SK-N-SH (cell line): ENCODE measurements at regions of chr17 and their contacts with region 1.

Region 1: DNA sequence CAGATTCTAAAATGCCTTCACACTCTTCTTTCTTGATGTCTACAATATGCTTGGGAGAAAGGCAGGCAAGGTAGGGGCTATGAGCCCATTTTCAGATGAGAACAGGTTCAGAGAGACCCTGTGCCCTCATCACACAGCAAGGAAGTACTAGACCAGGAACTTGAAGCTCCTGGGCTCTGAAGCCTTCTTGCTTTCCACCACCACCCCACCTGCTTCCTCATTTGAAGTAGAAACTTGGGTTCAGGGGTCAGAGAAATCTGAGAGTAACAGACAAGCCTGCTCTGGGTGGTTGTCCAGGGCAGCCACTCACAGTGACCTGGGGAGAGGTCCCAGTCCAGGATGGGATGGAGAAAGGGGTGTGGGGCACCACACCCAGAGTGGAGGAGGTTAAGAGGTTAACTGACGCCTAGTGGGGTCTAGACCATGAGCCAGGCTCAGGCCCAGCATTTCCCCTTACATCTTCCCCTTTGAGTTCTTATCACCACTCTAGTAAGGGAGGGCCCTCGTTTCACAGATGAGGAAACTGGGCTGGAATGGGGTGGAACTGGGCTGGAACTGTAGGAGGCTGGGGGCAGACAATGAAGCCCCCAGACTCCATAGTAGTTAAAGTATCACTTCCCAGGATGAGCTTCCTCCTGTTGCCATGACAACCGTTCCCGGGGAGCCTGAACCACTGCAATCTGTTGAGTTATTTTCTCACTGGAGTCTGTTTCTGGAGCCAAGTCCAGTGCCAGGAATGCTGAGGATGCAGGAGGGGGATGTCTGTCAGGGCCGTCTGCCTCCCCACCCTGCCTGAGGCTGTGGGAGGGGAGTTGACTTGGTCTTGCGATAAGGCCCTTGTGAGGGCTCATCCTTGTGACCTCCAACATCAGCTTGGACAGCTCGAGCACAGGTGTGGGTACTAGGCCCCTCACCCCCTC is 16.2 kb upstream of the PHF12 start:
- DNase-seq: no peak
- H3K4me3 ChIP-seq: no peak overlapping the region
- H3K27ac ChIP-seq: no peak overlapping the region
- H3K4me1 ChIP-seq: peaks cover 0 to 37% of the 10 kb centered on the region in 2 experiments; a peak in 3 of 4 replicates
- H3K27me3 ChIP-seq: no peaks in the 10 kb centered on the region; the same call in 1 of the 2 replicates
- CTCF ChIP-seq: no peak
- EP300 ChIP-seq: no peak
- RAD21 ChIP-seq: no peak

Region 2: DNA sequence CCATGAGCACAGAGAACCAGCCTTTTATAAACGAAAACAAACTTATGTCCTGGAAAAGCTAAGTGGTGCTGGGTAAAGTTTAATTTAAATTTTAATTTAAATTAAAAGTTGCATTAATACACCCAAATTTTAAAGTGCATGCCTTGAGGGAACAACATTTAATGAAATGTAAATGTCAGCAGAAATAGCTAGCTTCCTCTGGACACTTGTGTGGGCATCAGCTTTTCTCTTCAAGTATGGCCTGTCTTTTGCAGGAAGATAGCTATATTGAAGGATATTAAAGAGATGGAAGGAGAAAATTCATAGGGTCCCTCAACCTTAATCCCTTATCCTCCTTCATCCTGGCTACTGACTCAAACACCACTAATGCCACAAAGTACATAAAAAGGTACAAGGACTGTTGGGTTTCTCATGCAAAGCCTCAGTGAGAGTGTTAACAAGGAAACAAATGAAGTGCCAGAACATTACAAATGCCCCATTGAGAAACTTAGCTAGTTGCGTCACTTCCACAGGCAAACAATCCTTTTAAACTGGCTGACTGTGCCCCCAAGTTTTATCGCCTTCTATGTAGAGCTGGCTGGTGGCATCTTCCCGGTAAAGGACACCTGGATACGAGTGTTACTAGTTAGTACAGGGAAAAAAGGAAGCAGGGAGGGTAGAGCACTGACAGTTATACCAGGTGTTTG is 30.3 kb before region 1 on chr17:
- CTCF ChIA-PET with region 1: no interaction called
- POLR2A ChIA-PET with region 1: no interaction called
- DNase-seq: no peak
- H3K4me3 ChIP-seq: no peak overlapping the region
- H3K27ac ChIP-seq: no peak overlapping the region
- H3K4me1 ChIP-seq: peaks cover 0 to 26% of the 10 kb centered on the region in 2 experiments; a peak in 2 of 4 replicates
- H3K27me3 ChIP-seq: no peaks in the 10 kb centered on the region
- CTCF ChIP-seq: no peak
- EP300 ChIP-seq: no peak
- RAD21 ChIP-seq: no peak

Region 3: GRCh38 chr17:28992625-28993600 is 25.4 kb after region 1 on chr17:
- CTCF ChIA-PET with region 1: interaction called, 13 read pairs
- POLR2A ChIA-PET with region 1: no interaction called
- DNase-seq: no peak
- H3K4me3 ChIP-seq: no peak overlapping the region
- H3K27ac ChIP-seq: no peak overlapping the region
- H3K4me1 ChIP-seq: peaks cover 0 to 27% of the 10 kb centered on the region in 2 experiments; a peak in 1 of 4 replicates
- H3K27me3 ChIP-seq: no peaks in the 10 kb centered on the region
- CTCF ChIP-seq: no peak
- EP300 ChIP-seq: no peak
- RAD21 ChIP-seq: no peak

Region 4: DNA sequence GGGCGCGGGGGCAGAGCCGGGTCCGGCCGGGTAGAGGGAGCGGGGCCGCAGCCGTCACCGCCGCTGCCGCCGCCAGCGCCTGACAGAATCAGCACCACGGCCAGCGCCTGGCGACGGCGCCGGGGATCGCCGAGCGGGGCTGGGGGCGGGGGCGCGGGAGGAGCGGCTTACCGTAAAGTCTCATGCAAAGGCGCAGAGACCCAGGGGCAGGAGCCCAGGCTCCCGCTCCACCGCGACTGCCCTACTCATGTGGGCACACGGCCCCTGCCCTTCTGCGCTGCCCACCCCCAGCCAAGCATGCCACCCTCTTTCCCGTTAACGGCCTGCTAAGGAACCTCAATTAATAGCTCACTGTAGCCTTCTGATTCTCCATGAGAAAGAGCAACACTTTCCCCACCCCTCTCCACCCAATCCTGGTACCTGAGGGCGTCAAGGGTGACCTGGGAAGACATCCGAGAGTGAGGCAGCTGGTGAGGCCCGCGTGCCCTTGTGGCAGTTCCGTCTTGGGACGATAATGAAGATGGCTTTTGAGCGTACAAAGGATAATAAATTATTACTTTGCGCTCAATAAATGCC is 38.5 kb after region 1 on chr17 and contains the start of gene SEZ6:
- CTCF ChIA-PET with region 1: interaction called, 22 read pairs
- POLR2A ChIA-PET with region 1: no interaction called
- DNase-seq: peak; percentile 94
- H3K4me3 ChIP-seq: peak within 1 kb of the TSS in 1 of 2 experiments; percentile 43; a peak in 3 of 4 replicates
- H3K27ac ChIP-seq: peak within 1 kb of the TSS in 1 of 2 experiments; percentile 28; a peak in 1 of 4 replicates
- H3K4me1 ChIP-seq: peaks cover 7 to 27% of the 10 kb centered on the region in 2 experiments; a peak in 2 of 4 replicates
- H3K27me3 ChIP-seq: peaks cover 35% of the 10 kb centered on the region
- CTCF ChIP-seq: no peak
- EP300 ChIP-seq: peak; percentile 9 to 25; a peak in 1 of 4 replicates
- RAD21 ChIP-seq: no peak
- polyA plus RNA-seq, gene SEZ6: 0.12 and 0.37 TPM in 2 replicates

Region 5: GRCh38 chr17:29024316-29024952 is 57.0 kb after region 1 on chr17:
- CTCF ChIA-PET with region 1: no interaction called
- POLR2A ChIA-PET with region 1: no interaction called
- DNase-seq: no peak
- H3K4me3 ChIP-seq: no peak overlapping the region
- H3K27ac ChIP-seq: no peak overlapping the region
- H3K4me1 ChIP-seq: no peaks in the 10 kb centered on the region; a peak in 1 of 4 replicates
- H3K27me3 ChIP-seq: peaks cover 35% of the 10 kb centered on the region; the same call in 1 of the 2 replicates
- CTCF ChIP-seq: no peak
- EP300 ChIP-seq: no peak
- RAD21 ChIP-seq: no peak

Region 6: GRCh38 chr17:29042679-29043538 is 75.4 kb after region 1 on chr17 and contains the start of gene PIPOX:
- CTCF ChIA-PET with region 1: interaction called, 17 read pairs
- POLR2A ChIA-PET with region 1: interaction called, 17 read pairs
- DNase-seq: peak; percentile 76
- H3K4me3 ChIP-seq: no peak within 1 kb of the TSS
- H3K27ac ChIP-seq: peak within 1 kb of the TSS in 1 of 2 experiments; percentile 58; a peak in 2 of 4 replicates
- H3K4me1 ChIP-seq: peaks cover 43 to 49% of the 10 kb centered on the region in 2 experiments; a peak in 3 of 4 replicates
- H3K27me3 ChIP-seq: 0 out of 2 replicates have a peak, but pooled peaks cover under 1% of the 10 kb centered on the region
- CTCF ChIP-seq: peak; percentile 32; the same call in 1 of the 2 replicates
- EP300 ChIP-seq: no peak
- RAD21 ChIP-seq: peak; percentile 59
- polyA plus RNA-seq, gene PIPOX: 0.31 and 0.55 TPM in 2 replicates

Region 7: DNA sequence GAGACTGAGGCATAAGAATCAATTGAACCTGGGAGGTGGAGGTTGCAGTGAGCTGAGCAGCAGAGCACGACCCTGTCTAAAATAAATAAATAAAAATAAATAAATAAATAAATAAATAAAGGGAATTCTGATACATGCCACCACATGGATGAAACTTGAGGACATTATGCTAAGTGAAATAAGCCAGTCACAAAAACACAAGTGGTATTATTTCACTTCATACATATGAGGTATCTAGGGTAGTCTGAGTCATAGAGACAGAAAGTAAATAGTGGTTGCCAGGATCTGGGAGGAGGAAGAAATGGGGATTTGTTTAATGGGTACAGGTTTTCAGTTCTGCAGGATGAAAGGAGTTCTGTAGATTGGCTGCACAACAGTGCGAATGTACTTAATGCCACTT is 91.8 kb after region 1 on chr17:
- CTCF ChIA-PET with region 1: interaction called, 11 read pairs
- POLR2A ChIA-PET with region 1: no interaction called
- DNase-seq: no peak
- H3K4me3 ChIP-seq: no peak overlapping the region
- H3K27ac ChIP-seq: no peak overlapping the region
- H3K4me1 ChIP-seq: peaks cover 7 to 45% of the 10 kb centered on the region in 2 experiments; a peak in 3 of 4 replicates
- H3K27me3 ChIP-seq: no peaks in the 10 kb centered on the region
- CTCF ChIP-seq: no peak
- EP300 ChIP-seq: no peak
- RAD21 ChIP-seq: no peak

Region 8: DNA sequence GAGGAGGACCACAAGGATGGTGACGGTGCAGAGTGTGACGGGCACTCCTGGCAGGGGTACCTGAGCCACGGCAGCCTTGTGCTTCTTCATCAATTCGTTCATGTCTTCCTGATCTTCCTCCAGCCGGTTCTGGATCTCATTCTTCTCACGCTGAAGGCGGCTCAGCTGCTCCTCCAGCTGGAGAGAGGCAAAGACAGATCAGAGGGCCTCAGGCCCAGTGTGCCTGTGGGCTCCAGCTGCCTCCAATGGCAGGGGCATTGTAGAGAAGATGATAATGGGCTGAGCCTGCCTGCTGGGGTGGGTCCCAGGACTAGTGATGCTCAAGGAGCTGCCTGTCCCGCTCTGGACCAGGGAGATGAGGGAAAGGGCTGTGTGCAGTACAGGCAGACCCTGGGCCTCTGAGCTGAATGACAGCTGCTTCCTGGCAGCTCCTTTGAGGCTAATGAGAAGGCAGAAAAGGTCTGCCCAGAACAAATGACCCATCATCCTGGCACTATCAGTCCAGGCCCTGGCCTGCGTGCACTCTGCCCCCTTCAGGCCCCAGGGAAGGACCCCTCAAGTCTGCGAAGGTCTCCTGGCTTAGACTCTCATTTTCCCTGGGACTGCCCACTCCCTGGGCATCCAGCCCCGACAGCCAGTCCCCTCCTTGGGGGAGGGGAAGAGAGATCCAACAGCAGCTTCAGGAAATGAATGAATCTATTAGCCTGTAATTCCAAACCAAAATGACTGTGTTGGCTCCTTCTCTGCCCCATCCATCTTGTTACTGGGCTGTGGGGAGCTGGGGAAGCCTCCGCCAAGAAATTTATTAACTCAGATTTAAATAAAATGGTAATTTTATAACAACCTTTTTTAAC is 123.5 kb after region 1 on chr17:
- CTCF ChIA-PET with region 1: interaction called, 18 read pairs
- POLR2A ChIA-PET with region 1: no interaction called
- DNase-seq: peak; percentile 56
- H3K4me3 ChIP-seq: no peak overlapping the region
- H3K27ac ChIP-seq: peak overlapping the region in 1 of 2 experiments; percentile 53; a peak in 2 of 4 replicates
- H3K4me1 ChIP-seq: peaks cover 0 to 21% of the 10 kb centered on the region in 2 experiments; a peak in 3 of 4 replicates
- H3K27me3 ChIP-seq: no peaks in the 10 kb centered on the region
- CTCF ChIP-seq: no peak
- EP300 ChIP-seq: no peak
- RAD21 ChIP-seq: no peak; the same call in 1 of the 2 replicates

Region 9: GRCh38 chr17:29148790-29149430 is 181.4 kb after region 1 on chr17:
- CTCF ChIA-PET with region 1: interaction called, 12 read pairs
- POLR2A ChIA-PET with region 1: no interaction called
- DNase-seq: peak; percentile 99
- H3K4me3 ChIP-seq: peak overlapping the region; percentile 47 to 50
- H3K27ac ChIP-seq: peak overlapping the region; percentile 50 to 82; a peak in 3 of 4 replicates
- H3K4me1 ChIP-seq: peaks cover 30 to 35% of the 10 kb centered on the region in 2 experiments
- H3K27me3 ChIP-seq: no peaks in the 10 kb centered on the region
- CTCF ChIP-seq: peak; percentile 81
- EP300 ChIP-seq: 0 out of 4 replicates have a peak, but pooled peaks of 1 of the 2 experiments have one; percentile 17
- RAD21 ChIP-seq: peak; percentile 91

Region 10: DNA sequence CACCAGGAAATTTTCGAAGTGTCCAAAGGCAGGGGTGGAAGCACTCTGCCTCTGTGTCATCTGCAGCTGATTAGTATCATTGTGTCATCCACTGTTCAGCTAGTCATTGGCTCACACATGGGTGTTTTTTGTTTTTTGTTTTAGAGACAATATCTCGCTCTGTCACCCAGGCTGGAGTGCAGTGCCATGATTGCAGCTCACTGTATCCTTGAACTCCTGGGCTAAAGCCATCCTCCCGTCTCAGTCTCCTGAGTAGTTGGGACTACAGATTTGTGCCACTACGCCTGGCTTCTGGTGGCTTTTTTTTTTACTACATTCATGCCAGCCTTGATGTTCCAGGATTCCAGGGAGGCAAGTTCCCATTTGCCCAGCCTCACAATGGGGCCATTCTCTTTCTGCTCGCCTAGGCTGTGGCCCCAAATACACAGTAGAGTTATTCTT is 245.2 kb after region 1 on chr17:
- CTCF ChIA-PET with region 1: no interaction called
- POLR2A ChIA-PET with region 1: no interaction called
- DNase-seq: no peak
- H3K4me3 ChIP-seq: no peak overlapping the region
- H3K27ac ChIP-seq: no peak overlapping the region
- H3K4me1 ChIP-seq: no peaks in the 10 kb centered on the region; a peak in 1 of 4 replicates
- H3K27me3 ChIP-seq: no peaks in the 10 kb centered on the region
- CTCF ChIP-seq: no peak
- EP300 ChIP-seq: no peak
- RAD21 ChIP-seq: no peak